ENCODE measurements at regions of chr2 and their contacts with region 1.

Region 1: GRCh38 chr2:156400706-156401678 is 35.2 kb upstream of the GPD2 start:
- DNase-seq: peak; percentile 41 to 75
- ATAC-seq: peak; percentile 75

Region 2: GRCh38 chr2:155930312-155930711 is 470.7 kb before region 1 on chr2:
- intact Hi-C with region 1: no loop called
- DNase-seq: no peak
- ATAC-seq: no peak

Region 3: DNA sequence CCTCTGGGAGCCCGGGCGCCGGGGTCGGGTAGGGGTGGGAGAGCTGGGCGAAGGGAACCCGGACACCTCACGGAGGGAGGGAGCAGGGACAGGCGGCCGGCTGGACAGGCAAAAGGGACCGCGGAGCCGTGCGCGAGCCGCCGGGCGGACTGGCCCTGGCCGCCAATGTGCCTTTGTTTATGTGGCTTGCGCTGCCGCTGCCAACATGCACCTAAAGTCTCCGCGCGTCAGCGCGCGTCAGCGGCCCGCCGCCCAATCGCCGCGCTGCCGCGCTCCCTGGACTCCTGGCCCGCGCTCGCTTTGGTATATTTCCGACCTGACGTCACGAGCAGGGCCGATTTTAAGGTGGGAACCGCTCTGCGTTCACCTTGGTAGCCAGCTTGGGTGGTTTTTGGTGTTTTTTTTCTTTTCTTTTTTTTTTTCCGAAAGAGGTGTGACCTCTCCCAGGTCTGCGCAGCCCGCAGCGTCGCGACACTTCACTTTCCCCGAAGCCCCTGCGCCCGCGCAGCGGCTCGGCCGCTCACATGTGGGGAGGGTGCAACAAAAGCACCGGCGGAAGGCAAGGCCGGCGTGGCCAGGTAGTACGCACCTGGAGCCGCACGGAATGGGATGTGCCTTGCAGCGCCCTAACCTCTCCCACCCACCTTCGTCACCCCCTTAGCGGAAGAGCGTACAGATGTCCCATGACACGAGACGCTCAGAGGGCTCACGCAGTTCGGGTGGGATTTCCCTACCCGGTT is 68.3 kb before region 1 on chr2 and contains the start of gene NR4A2:
- intact Hi-C with region 1: loop called in 1 of 2 experiments (anchors 5 kb)
- DNase-seq: peak; percentile 92 to 95
- ATAC-seq: peak; percentile 78
- total RNA-seq, gene NR4A2: 3.4 to 9.7 TPM

Region 4: GRCh38 chr2:156486147-156486546 is 85.2 kb after region 1 on chr2:
- intact Hi-C with region 1: no loop called
- DNase-seq: no peak
- ATAC-seq: no peak